Mammary epithelial cell (primary cell): ENCODE measurements at regions of chr1 and their contacts with region 1.

Region 1: GRCh38 chr1:235075188-235075926 is 53.3 kb downstream of the TOMM20 start:
- DNase-seq: peak; percentile 86
- H3K4me3 ChIP-seq: no peak overlapping the region
- H3K27ac ChIP-seq: peak overlapping the region; percentile 78
- H3K4me1 ChIP-seq: peaks cover 54% of the 10 kb centered on the region
- H3K27me3 ChIP-seq: no peaks in the 10 kb centered on the region
- CTCF ChIP-seq: no peak

Region 2: GRCh38 chr1:234499119-234499942 is 576.0 kb before region 1 on chr1:
- CTCF ChIA-PET with region 1: interaction called, 3 read pairs
- dilution Hi-C with region 1: loop called (anchors 5 kb)
- in situ Hi-C with region 1: loop called (anchors 5 kb)
- intact Hi-C with region 1: no loop called
- DNase-seq: peak; percentile 84
- H3K4me3 ChIP-seq: peak overlapping the region in 2 of 3 experiments; percentile 10 to 13
- H3K27ac ChIP-seq: peak overlapping the region; percentile 90
- H3K4me1 ChIP-seq: peaks cover 38% of the 10 kb centered on the region
- H3K27me3 ChIP-seq: no peaks in the 10 kb centered on the region
- CTCF ChIP-seq: peak; percentile 89 to 97

Region 3: DNA sequence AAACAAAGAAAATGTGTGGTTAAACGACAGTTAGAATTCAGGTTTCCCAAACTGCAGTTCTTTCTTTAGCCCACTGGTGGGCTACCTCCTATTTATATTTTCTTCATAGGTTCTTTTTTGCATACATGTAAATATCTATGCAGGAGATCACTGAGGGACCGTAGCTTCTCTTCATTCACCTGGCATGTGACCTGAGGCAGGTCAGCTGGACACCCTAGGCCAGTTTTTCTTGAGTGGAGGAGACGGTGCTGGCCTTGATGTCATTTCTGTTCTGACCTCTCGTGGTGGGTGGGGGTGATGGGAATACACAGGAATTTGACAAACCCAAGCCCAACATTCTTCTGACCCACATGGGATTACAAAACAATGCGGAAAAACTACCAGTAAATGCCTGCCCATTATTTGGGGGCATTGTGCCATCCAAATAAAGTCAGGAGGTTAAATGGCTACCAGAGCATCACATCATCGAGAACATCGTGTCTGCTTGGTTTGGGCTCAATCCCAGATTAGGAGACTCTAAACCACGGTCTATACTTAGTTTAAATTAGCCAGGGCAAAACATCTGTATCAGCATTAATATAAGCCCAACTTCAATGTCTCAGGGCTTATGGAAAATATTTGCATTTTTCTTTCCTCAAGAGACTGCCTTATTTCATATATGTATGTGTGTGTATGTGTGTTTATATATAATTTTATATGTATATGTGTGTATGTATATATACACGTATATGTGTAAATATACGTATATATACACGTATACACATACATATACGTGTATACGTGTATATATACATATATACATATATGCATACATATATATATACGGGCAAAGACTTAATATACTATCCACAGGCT is 458.0 kb before region 1 on chr1:
- CTCF ChIA-PET with region 1: no interaction called
- dilution Hi-C with region 1: loop called (anchors 5 kb)
- in situ Hi-C with region 1: loop called in 1 of 2 experiments (anchors 5 kb)
- intact Hi-C with region 1: no loop called
- DNase-seq: peak; percentile 33
- H3K4me3 ChIP-seq: no peak overlapping the region
- H3K27ac ChIP-seq: peak overlapping the region; percentile 95
- H3K4me1 ChIP-seq: peaks cover 76% of the 10 kb centered on the region
- H3K27me3 ChIP-seq: no peaks in the 10 kb centered on the region
- CTCF ChIP-seq: peak; percentile 17 to 18

Region 4: DNA sequence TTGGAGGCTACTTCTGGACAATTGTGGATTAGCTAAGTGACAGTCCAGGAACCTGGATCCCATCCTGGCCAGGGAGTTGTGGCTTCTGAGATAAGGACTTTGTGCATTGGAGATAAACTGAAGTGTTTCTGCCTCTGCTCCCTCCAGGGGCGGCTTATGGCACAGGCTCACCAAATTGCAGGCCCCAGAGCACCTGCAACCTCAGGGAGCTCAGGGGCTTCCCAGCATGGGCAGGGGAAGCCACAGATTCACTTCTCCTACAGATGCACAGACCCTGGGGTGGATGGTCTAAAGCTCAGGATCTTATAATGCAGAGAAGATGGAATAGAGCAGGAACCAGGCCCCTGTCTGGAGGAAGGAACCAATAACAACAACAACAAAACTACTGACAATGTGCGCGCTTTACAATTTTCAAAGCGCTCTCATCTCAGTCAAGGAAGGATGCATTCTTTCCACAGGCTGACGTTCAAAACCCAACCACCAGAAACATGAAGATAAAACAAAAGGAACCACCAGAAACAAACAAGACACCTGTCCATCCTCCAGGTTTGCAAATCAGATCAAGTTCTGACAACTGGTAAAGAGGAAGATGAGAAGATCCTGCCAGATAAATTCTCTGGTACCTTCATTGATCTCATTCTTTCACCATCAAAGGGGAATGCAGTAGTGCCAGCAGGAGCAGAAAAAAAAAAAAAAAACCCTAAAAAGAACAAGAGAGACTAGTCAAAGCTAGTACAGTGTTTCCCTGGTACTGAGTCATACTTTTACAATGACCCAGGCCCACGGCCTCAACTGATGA is 344.4 kb before region 1 on chr1:
- CTCF ChIA-PET with region 1: no interaction called
- dilution Hi-C with region 1: no loop called
- in situ Hi-C with region 1: loop called (anchors 10 kb)
- intact Hi-C with region 1: no loop called
- DNase-seq: peak; percentile 93
- H3K4me3 ChIP-seq: no peak overlapping the region
- H3K27ac ChIP-seq: no peak overlapping the region
- H3K4me1 ChIP-seq: peaks cover 40% of the 10 kb centered on the region
- H3K27me3 ChIP-seq: no peaks in the 10 kb centered on the region
- CTCF ChIP-seq: no peak

Region 5: GRCh38 chr1:234893725-234894630 is 181.4 kb before region 1 on chr1:
- CTCF ChIA-PET with region 1: no interaction called
- dilution Hi-C with region 1: loop called (anchors 10 kb)
- in situ Hi-C with region 1: no loop called
- intact Hi-C with region 1: no loop called
- DNase-seq: peak; percentile 62
- H3K4me3 ChIP-seq: no peak overlapping the region
- H3K27ac ChIP-seq: no peak overlapping the region
- H3K4me1 ChIP-seq: peaks cover 11% of the 10 kb centered on the region
- H3K27me3 ChIP-seq: no peaks in the 10 kb centered on the region
- CTCF ChIP-seq: no peak

Region 6: GRCh38 chr1:234965111-234965510 is 110.2 kb before region 1 on chr1:
- CTCF ChIA-PET with region 1: no interaction called
- dilution Hi-C with region 1: no loop called
- in situ Hi-C with region 1: no loop called
- intact Hi-C with region 1: no loop called
- DNase-seq: no peak
- H3K4me3 ChIP-seq: no peak overlapping the region
- H3K27ac ChIP-seq: no peak overlapping the region
- H3K4me1 ChIP-seq: peaks cover 28% of the 10 kb centered on the region
- H3K27me3 ChIP-seq: no peaks in the 10 kb centered on the region
- CTCF ChIP-seq: no peak

Region 7: DNA sequence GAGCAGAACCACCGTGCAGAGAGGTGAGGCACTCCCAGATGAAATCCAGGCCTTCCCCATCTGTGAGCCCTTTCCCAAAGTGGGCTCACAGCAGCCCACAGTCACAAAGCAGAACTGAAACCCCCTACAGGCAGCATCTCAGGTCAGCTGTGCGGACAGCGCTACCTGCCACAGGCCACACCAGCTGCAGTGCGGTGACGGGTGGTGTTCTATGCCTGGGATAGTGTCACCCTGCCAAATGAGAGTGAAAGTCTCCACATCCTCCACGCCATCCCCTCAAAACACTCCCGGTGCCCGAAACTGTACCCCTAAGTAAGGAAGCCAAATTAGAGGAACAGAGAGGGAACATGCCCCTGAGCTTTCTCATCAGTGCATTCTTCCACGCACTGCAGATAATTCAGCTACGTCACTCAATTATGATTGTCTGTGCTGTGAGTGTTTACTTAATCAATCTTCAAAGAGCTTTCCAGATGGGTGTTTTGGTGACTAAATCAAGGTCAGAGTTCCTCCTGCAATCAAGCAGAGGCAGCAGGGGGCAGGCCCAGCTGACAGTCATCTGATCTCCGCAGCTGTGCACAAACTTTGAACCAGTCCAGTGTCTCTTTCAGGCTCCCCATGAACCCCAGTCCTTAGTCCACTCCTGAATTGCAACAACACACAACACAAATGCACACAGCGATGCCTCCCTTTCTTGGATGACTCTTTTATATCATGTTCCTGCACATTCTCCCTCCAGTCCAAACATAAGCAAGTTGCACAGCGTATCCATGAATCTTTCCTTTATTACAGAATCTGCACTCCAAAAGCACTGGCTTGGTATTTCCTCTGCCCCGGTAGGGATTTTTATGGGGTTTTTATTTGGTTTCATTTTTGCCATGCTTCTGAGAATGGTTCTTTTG is 96.7 kb before region 1 on chr1:
- CTCF ChIA-PET with region 1: no interaction called
- dilution Hi-C with region 1: loop called (anchors 5 kb)
- in situ Hi-C with region 1: no loop called
- intact Hi-C with region 1: no loop called
- DNase-seq: peak; percentile 52
- H3K4me3 ChIP-seq: no peak overlapping the region
- H3K27ac ChIP-seq: peak overlapping the region; percentile 44
- H3K4me1 ChIP-seq: peaks cover 59% of the 10 kb centered on the region
- H3K27me3 ChIP-seq: no peaks in the 10 kb centered on the region
- CTCF ChIP-seq: peak in 1 of 2 donors; percentile 6

Region 8: DNA sequence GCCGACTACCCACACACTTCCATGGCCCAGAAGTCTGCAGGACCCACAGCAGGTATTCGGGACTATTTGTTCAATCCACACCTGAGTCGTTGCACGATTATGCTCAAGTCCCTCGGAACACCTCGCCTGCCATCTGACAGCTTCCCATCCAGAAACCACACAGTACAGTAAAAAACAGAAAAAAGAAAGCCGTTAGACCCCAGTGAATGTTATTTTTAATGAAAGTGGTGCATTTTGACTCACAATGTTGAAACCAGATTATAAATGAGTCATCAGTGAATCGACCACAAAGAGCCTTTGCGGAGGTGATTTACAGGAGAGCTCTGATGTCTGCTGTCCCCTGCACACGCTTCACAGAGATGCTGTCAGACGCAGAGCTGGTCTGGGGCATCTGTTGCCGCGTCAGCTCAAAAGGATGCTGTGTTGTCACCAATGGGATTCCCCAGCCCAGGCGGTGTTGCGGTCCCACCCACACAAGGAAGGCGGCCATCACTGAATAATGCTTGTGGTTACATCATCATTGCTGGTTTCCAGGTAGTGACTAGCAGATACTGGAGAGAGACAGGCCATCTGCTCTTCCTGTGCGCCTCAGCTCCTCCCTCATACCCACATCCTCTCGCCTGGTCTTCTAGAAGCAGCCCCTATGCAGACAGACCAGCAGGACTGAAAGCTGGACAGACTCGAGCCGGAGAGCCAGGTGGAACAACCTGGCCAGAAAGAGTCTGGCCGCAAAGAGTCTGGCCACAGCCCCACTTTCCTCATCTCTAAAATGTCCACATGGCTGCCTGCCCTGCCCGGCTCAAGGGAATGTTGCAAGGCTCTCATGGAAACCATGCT is 63.5 kb before region 1 on chr1:
- CTCF ChIA-PET with region 1: no interaction called
- dilution Hi-C with region 1: no loop called
- in situ Hi-C with region 1: no loop called
- intact Hi-C with region 1: loop called (anchors 1 kb)
- DNase-seq: peak; percentile 100
- H3K4me3 ChIP-seq: no peak overlapping the region
- H3K27ac ChIP-seq: peak overlapping the region; percentile 97
- H3K4me1 ChIP-seq: peaks cover 20% of the 10 kb centered on the region
- H3K27me3 ChIP-seq: no peaks in the 10 kb centered on the region
- CTCF ChIP-seq: no peak

Region 9: GRCh38 chr1:235160957-235161684 is 85.8 kb after region 1 on chr1 and contains the start of gene RBM34:
- CTCF ChIA-PET with region 1: no interaction called
- dilution Hi-C with region 1: no loop called
- in situ Hi-C with region 1: no loop called
- intact Hi-C with region 1: no loop called
- DNase-seq: peak; percentile 90
- H3K4me3 ChIP-seq: peak within 1 kb of the TSS; percentile 76 to 94 (median 81)
- H3K27ac ChIP-seq: peak within 1 kb of the TSS; percentile 90
- H3K4me1 ChIP-seq: peaks cover 12% of the 10 kb centered on the region
- H3K27me3 ChIP-seq: no peaks in the 10 kb centered on the region
- CTCF ChIP-seq: peak in 1 of 2 donors; percentile 28
- total RNA-seq, gene RBM34: 44.8 to 96.2 TPM

Region 10: DNA sequence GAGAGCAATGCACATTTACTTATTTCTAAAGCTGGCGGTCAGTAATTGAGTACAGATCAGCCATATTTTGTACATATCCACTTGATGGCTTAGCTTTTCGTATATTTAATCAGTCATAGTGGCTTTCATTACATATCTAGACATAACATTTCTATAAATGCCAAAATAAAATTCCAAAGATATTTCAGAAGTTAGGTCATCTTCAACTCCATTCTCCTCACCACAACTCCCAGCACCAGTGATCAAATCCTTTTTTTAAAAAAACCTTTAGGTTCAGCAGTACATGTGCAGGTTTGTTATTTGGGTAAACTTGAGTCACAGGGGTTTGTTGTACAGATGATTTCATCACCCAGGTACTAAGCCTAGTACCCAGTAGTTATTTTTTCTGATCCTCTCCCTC is 628.1 kb after region 1 on chr1:
- CTCF ChIA-PET with region 1: no interaction called
- dilution Hi-C with region 1: no loop called
- in situ Hi-C with region 1: no loop called
- intact Hi-C with region 1: no loop called
- DNase-seq: peak; percentile 69
- H3K4me3 ChIP-seq: no peak overlapping the region
- H3K27ac ChIP-seq: no peak overlapping the region
- H3K4me1 ChIP-seq: peaks cover 8% of the 10 kb centered on the region
- H3K27me3 ChIP-seq: no peaks in the 10 kb centered on the region
- CTCF ChIP-seq: no peak